ENCODE measurements at regions of chr3 and their contacts with region 1.

Region 1: GRCh38 chr3:196528639-196529233 is 13.6 kb upstream of the SMCO1 start:
- DNase-seq: no peak
- H3K4me3 ChIP-seq: peak overlapping the region; percentile 49
- H3K27me3 ChIP-seq: no peaks in the 10 kb centered on the region; the same call in 1 of the 2 replicates
- CTCF ChIP-seq: peak; percentile 51

Region 2: DNA sequence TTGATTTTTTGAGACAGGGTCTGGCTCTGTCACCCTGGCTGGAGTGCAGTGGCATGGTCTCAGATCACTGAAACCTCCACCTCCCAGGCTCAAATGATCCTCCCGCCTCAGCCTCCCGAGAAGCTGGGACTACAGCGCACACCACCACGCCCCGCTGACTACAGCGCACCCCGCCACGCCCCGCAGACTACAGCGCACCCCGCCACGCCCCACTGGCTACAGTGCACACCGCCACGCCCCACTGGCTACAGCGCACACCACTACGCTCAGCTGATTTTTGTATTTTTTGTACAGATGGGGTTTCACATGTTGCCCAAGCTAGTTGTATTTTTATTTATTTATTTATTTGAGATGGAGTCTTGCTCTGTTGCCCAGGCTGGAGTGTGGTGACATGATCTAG is 276.8 kb before region 1 on chr3:
- CTCF ChIA-PET with region 1: interaction called, 42 read pairs
- POLR2A ChIA-PET with region 1: no interaction called
- DNase-seq: no peak
- H3K4me3 ChIP-seq: no peak overlapping the region
- H3K27me3 ChIP-seq: no peaks in the 10 kb centered on the region
- CTCF ChIP-seq: no peak

Region 3: DNA sequence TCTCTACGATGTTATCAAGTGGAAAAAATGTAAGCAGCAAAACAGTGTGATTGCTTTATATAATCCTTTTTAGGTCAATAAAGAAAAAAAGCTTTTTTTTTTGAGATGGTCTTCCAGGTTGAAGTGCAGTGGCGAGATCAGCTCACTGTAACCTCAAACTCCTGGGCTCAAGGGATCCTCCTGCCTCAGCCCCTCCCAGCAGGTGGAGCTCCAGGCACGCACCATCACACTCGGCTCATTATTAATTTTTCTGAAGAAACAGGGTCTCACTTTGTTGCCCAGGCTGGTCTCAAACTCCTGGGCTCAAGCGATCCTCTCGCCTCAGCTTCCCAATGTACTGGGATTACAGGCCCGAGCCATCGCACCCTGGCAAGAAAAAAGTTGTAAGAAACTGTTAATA is 42.5 kb before region 1 on chr3:
- CTCF ChIA-PET with region 1: no interaction called
- POLR2A ChIA-PET with region 1: no interaction called
- DNase-seq: no peak
- H3K4me3 ChIP-seq: no peak overlapping the region
- H3K27me3 ChIP-seq: no peaks in the 10 kb centered on the region
- CTCF ChIP-seq: peak; percentile 37; the same call in 1 of the 2 replicates

Region 4: DNA sequence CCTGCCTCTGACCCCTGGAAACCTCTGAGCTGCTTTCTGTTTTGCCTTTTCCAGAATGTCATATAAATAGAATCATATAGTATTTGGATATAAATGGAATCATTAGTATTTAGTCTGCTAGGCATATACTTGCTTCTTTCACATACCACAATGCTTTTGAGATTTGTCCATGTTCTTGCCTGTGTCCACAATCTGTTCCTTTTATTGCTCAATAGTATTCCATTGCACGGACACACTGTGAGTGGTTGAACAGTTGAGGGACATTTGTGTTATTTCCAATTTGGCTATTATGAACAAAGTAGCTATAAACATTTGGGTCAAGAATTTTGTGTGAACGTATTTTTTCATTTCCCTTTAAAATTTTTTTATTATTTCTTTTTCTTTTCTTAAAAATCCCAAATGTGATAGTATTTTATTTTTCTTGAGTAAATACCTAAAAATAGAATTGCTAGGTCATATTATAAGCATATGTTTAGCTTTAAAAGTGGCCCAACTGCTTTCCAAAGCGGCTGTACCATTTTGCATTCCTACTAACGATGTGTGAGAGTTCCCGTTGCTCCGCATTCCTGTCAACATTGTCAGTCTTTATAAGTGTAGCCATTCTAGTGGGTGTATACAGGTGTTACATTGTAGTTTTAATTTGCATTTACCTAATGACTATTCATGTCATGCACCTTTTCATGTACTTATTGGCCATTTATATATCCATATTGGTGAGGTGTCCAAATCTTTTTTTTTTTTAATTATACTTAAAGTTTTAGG is 13.1 kb after region 1 on chr3:
- CTCF ChIA-PET with region 1: interaction called, 14 read pairs
- POLR2A ChIA-PET with region 1: no interaction called
- DNase-seq: no peak
- H3K4me3 ChIP-seq: no peak overlapping the region
- H3K27me3 ChIP-seq: no peaks in the 10 kb centered on the region; the same call in none of the 2 replicates
- CTCF ChIP-seq: no peak

Region 5: GRCh38 chr3:196694202-196694638 is 165.5 kb after region 1 on chr3:
- CTCF ChIA-PET with region 1: no interaction called
- POLR2A ChIA-PET with region 1: no interaction called
- DNase-seq: no peak
- H3K4me3 ChIP-seq: no peak overlapping the region
- H3K27me3 ChIP-seq: no peaks in the 10 kb centered on the region
- CTCF ChIP-seq: no peak; the same call in 1 of the 2 replicates

Measured in BJ (cell line).